H1 (cell line): ENCODE measurements at regions of chr10 and their contacts with region 1.

Region 1: DNA sequence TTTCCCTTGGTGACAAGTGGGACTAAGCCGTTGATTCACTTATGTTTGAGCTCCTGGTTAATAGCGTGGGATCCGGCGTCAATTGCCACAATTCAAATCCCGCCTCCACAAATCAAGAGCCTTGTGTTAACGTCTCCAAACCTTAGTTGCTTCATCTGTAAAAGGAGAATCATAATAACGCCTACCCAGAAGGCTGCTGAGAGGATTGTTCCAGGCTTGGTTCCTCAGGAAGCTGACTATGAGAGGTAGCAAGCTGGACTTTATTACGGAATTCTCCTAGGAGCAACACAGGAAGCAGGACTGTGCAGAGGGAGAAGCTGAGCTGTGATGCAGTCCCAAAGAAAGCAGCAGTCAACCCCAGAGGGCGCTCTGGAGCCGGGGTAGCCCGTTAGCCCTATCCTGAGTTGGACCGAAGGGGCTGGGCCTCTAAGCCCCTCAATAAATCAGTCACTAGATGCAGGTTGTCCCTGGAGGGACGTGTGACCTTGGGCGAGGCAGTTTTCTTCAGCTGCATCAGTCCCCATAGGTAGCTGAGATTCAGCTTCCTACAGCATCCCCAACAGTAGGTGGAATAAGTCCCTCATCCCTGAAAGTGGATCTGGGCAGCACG is 6.9 kb upstream of the BAG3 start:
- DNase-seq: peak in 1 of 2 experiments; percentile 96
- H3K4me3 ChIP-seq: no peak overlapping the region
- H3K27ac ChIP-seq: no peak overlapping the region
- H3K4me1 ChIP-seq: no peaks in the 10 kb centered on the region; a peak in 2 of 7 replicates
- H3K27me3 ChIP-seq: no peaks in the 10 kb centered on the region
- CTCF ChIP-seq: peak; percentile 77 to 96 (median 87)
- EP300 ChIP-seq: no peak
- POLR2A ChIP-seq: no peak
- RAD21 ChIP-seq: peak; percentile 74 to 78

Region 2: GRCh38 chr10:119602241-119603095 is 41.8 kb before region 1 on chr10:
- CTCF ChIA-PET with region 1: interaction called, 18 read pairs
- POLR2A ChIA-PET with region 1: interaction called, 3 read pairs
- DNase-seq: peak in 1 of 2 experiments; percentile 64
- H3K4me3 ChIP-seq: no peak overlapping the region
- H3K27ac ChIP-seq: no peak overlapping the region
- H3K4me1 ChIP-seq: peaks cover 0 to 5% (median 1%) of the 10 kb centered on the region in 4 experiments; a peak in 2 of 7 replicates
- H3K27me3 ChIP-seq: no peaks in the 10 kb centered on the region
- CTCF ChIP-seq: peak; percentile 70 to 84 (median 73)
- EP300 ChIP-seq: no peak
- POLR2A ChIP-seq: no peak
- RAD21 ChIP-seq: peak; percentile 54 to 66

Region 3: DNA sequence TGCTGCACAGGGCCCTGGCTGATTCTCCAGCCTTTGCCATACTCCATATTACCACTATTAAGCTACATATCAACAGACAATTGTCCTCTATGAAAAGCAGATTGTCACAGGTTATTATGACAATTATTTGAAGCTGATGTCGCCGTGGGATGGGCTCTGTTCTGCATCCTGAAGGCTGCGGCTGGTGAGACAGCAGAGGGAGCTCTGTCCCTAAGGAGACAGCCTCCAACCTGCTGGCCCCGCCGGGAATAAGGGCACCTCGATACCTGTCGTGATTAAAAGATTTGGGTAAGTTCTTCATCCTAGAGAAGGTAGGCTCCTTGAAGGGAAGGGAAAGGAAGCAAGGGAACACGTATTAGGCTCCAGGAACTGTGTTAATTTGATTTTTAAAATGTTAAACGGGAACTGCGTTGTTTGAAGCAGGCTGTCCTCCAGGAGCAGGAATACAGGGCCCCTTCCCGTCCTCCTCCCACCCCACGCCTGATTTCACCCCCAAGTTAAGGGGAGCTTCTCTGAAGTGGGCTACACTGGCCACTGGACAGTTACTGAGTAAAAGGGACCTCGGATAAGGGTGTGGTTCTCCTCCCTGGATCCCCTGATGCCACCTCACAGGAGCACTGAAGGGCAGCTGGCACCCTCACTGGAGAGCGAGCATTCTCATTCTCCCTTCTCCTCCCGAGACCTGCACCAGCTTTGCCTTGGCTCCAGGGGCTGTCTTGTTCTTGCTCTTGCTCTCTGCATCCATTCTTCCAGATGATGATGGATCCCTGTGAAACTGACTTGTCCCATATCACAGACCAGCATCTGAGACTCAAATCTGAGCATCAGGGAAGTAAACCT is 35.8 kb before region 1 on chr10:
- CTCF ChIA-PET with region 1: interaction called, 29 read pairs
- POLR2A ChIA-PET with region 1: no interaction called
- DNase-seq: peak in 1 of 2 experiments; percentile 64
- H3K4me3 ChIP-seq: no peak overlapping the region
- H3K27ac ChIP-seq: no peak overlapping the region
- H3K4me1 ChIP-seq: no peaks in the 10 kb centered on the region
- H3K27me3 ChIP-seq: no peaks in the 10 kb centered on the region
- CTCF ChIP-seq: peak; percentile 69 to 82 (median 76)
- EP300 ChIP-seq: no peak
- POLR2A ChIP-seq: no peak
- RAD21 ChIP-seq: peak; percentile 79 to 85

Region 4: DNA sequence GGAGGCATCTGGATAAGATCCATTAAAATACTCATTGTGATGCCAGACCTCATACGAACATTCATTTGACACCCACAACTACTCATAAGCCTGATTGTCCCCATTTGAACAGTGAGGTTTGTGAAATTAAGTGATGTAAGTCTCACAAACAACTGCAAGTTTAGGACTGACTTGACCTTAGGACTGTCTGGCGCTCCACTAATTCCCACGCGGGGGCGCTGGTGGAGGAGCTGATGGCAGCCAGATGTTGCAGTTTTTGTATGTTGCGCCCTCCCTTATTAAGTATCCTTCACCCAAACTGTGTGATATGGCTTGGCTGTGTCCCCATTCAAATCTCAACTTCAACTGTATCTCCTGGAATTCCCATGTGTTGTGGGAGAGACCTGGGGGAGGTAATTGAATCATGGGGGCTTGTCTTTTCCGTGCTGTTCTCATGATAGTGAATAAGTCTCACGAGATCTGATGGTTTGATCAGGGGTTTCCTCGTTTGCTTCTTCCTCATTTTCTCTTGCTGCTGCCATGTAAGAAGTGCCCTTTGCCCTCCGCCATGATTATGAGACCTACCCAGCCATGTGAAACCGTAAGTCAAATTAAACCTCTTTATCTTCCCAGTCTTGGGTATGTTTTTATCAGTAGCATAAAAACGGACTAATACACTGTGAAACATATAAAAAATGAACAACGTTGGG is 27.3 kb before region 1 on chr10:
- CTCF ChIA-PET with region 1: interaction called, 21 read pairs
- POLR2A ChIA-PET with region 1: no interaction called
- DNase-seq: peak in 1 of 2 experiments; percentile 64
- H3K4me3 ChIP-seq: no peak overlapping the region
- H3K27ac ChIP-seq: no peak overlapping the region
- H3K4me1 ChIP-seq: no peaks in the 10 kb centered on the region; a peak in 2 of 7 replicates
- H3K27me3 ChIP-seq: no peaks in the 10 kb centered on the region
- CTCF ChIP-seq: peak; percentile 48 to 54 (median 53); a peak in 3 of 4 replicates
- EP300 ChIP-seq: no peak
- POLR2A ChIP-seq: no peak
- RAD21 ChIP-seq: peak; percentile 31 to 51; a peak in 3 of 4 replicates

Region 5: DNA sequence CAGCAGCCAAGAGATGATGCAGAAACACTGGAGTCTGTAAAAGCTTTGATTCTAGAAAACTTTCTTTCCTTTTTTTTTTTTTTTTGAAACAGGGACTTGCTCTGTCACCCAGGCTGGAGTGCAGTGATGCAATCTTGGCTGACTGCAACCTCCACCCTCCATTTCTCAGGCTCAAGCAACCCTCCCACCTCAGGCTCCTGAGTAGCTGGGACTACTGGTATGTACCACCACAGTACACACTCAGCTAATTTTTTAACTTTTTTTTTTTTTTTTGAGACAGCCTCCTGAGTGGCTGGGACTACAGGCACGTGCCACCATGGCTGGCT is 10.1 kb before region 1 on chr10:
- CTCF ChIA-PET with region 1: interaction called, 55 read pairs
- POLR2A ChIA-PET with region 1: no interaction called
- DNase-seq: no peak
- H3K4me3 ChIP-seq: no peak overlapping the region
- H3K27ac ChIP-seq: no peak overlapping the region
- H3K4me1 ChIP-seq: no peaks in the 10 kb centered on the region
- H3K27me3 ChIP-seq: no peaks in the 10 kb centered on the region
- CTCF ChIP-seq: no peak
- EP300 ChIP-seq: no peak
- POLR2A ChIP-seq: no peak
- RAD21 ChIP-seq: no peak

Region 6: DNA sequence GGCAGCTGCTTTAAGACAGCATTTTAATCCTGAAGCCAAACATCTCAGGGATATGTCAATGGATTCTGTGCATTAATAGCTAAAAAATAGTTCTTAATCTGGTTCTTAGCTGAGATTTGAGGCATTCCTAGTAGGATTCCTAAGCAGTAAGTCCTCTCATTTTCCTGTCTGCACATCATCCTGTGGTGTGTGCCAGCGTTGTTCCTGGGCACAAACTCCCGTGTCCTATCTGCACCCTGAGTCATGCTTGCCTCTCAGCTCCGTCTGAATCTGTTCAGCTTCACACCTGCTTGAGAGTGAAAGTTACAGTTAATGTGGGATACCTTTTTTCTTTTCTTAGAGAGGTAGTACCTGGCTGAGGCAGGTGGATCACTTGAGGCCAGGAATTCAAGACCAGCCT is 26.4 kb after region 1 on chr10:
- CTCF ChIA-PET with region 1: interaction called, 13 read pairs
- POLR2A ChIA-PET with region 1: interaction called, 3 read pairs
- DNase-seq: no peak
- H3K4me3 ChIP-seq: no peak overlapping the region
- H3K27ac ChIP-seq: no peak overlapping the region
- H3K4me1 ChIP-seq: peaks cover 10 to 17% (median 13%) of the 10 kb centered on the region in 4 experiments
- H3K27me3 ChIP-seq: no peaks in the 10 kb centered on the region
- CTCF ChIP-seq: no peak
- EP300 ChIP-seq: no peak
- POLR2A ChIP-seq: no peak
- RAD21 ChIP-seq: no peak

Region 7: GRCh38 chr10:119769886-119770285 is 125.6 kb after region 1 on chr10:
- CTCF ChIA-PET with region 1: no interaction called
- POLR2A ChIA-PET with region 1: no interaction called
- DNase-seq: no peak
- H3K4me3 ChIP-seq: no peak overlapping the region
- H3K27ac ChIP-seq: no peak overlapping the region
- H3K4me1 ChIP-seq: peaks cover 0 to 2% (median 0%) of the 10 kb centered on the region in 4 experiments; a peak in 2 of 7 replicates
- H3K27me3 ChIP-seq: no peaks in the 10 kb centered on the region
- CTCF ChIP-seq: no peak
- EP300 ChIP-seq: no peak
- POLR2A ChIP-seq: no peak
- RAD21 ChIP-seq: no peak